Psoas muscle (tissue), 8 donors: ENCODE measurements at regions of chr12 and their contacts with region 1.

Region 1: GRCh38 chr12:25241167-25242020 is 9.3 kb downstream of the KRAS start:
- DNase-seq: no peak
- ATAC-seq: peak in 2 of 4 donors; percentile 62 to 86
- H3K4me3 ChIP-seq: no peak overlapping the region
- H3K27ac ChIP-seq: no peak overlapping the region
- H3K4me1 ChIP-seq: peaks cover 1% of the 10 kb centered on the region
- H3K27me3 ChIP-seq: no peaks in the 10 kb centered on the region
- CTCF ChIP-seq: peak; percentile 81

Region 2: DNA sequence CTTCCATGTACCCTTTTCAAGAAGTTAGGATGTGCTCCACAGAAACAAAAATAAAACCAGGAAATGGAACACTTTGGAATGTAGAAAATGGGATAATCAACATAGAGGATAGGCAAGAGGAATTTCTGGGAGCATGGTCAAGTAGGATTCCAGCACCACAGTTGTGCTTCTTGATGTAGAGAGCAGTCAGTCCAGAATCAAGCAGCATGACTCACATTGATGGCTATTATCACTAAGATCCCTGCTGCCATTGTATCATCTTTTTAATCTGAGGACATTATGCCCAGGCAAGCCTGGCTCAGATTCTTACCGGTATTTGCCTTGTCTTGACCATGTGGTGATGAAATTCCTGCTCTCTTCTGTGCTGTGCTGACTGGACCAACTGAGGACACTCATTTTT is 40.7 kb before region 1 on chr12:
- intact Hi-C with region 1: loop called in 1 of 2 experiments (anchors 5 kb)
- DNase-seq: no peak
- ATAC-seq: peak; percentile 33 to 58 (median 45)
- H3K4me3 ChIP-seq: no peak overlapping the region
- H3K27ac ChIP-seq: no peak overlapping the region
- H3K4me1 ChIP-seq: peaks cover 26% of the 10 kb centered on the region
- H3K27me3 ChIP-seq: no peaks in the 10 kb centered on the region
- CTCF ChIP-seq: no peak

Region 3: DNA sequence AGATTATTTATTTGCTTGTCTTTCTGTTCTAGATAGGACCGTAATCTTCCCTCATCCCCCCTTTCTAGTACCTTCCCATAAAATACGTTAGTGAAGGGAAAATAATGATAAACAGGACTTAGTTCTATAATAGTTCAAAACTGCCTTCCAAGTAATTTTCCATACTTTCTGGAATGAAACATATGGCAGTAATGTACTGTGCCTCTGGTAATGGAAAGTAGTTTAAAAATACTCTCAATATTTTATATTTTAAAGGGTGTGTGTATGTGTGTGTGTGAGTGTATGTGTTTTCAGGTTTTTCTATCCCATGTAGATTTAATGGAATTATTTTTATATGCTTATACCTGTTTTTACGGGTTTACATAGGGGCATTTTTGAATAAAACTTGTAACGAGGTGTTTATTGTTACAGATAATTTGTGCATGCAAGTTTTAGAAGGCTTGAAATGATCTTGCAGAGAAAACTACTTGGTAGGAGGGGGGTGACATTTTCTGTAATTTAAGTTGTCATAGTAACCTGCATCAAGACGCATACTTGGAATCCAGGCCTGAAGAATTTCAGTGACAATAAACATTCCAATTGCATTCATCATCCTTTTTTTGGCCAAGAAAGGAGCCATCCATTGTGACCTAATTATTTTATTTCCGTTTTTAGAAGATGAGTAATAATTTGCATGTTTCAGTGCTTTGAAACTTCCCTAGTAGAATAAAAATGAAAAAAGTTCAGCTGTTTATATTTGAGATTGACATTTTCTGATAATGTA is 756.0 kb after region 1 on chr12:
- intact Hi-C with region 1: no loop called
- DNase-seq: no peak
- ATAC-seq: peak in 3 of 4 donors; percentile 49 to 51 (median 50)
- H3K4me3 ChIP-seq: no peak overlapping the region
- H3K27ac ChIP-seq: no peak overlapping the region
- H3K4me1 ChIP-seq: peaks cover 39% of the 10 kb centered on the region
- H3K27me3 ChIP-seq: no peaks in the 10 kb centered on the region
- CTCF ChIP-seq: no peak